ENCODE measurements at regions of chr5 and their contacts with region 1.

Region 1: DNA sequence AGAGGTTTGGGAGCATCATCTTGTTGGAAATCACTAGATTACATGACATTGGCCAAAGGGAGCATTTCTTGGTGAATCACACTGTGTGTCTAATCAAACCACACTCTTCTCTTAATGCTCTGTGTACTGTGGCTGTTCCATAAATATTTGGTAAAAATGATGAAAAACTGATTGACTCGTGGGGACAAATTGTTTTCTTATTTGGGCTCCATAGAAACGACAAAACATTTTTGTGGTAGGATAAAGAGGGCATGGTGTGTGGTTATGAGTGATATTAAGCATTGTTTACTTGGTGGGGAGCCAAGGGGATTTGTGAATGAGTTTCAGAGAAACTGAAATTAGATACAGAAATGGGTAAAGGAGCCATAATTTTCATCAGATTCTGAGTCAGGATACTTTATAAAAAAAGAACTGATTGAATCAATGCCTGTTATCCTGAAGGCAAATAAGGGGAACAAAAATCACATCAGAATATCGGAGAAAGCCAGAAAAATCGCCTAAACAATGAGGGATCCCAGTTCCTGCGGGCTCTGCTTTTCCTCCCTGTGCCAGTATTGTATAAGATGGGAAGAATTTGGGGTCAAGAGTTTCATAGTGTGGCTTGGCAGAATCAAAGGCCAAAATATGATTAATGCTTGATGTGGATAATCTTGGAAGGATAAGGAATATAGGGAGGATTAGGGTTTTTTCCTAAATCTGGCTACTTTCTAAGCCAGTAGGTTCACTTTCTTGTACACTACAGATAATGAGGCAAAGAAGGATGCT is 33.3 kb downstream of the FBXL7 start:
- DNase-seq: peak; percentile 38
- H3K4me3 ChIP-seq: no peak overlapping the region
- H3K27me3 ChIP-seq: no peaks in the 10 kb centered on the region
- CTCF ChIP-seq: no peak

Region 2: DNA sequence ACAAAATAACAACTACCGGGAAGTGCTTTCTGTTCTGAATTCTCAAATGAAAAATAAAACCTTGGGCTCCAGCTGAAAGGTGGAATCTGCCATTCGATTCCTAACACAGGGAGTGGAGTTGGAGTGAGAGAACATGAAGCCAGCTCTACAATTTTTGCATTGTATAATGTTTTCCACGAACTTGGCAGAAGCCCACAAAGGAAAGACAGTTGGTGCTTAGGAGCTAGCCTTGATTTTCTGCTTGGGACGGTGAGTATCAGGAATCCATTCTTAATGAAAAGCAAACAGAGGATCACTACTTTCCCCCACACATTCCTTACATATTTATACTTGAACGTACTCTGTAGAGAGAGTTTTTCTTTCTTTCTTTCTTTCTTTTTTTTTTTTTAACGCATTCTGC is 107.5 kb before region 1 on chr5:
- CTCF ChIA-PET with region 1: no interaction called
- POLR2A ChIA-PET with region 1: no interaction called
- DNase-seq: no peak
- H3K4me3 ChIP-seq: no peak overlapping the region
- H3K27me3 ChIP-seq: peaks cover 3% of the 10 kb centered on the region; the same call in 1 of the 2 replicates
- CTCF ChIP-seq: no peak

Region 3: GRCh38 chr5:15521381-15522174 is 11.7 kb before region 1 on chr5:
- CTCF ChIA-PET with region 1: interaction called, 10 read pairs
- POLR2A ChIA-PET with region 1: no interaction called
- DNase-seq: no peak
- H3K4me3 ChIP-seq: no peak overlapping the region
- H3K27me3 ChIP-seq: no peaks in the 10 kb centered on the region
- CTCF ChIP-seq: no peak